Lower leg skin (tissue), 4 donors: ENCODE measurements at regions of chr16 and their contacts with region 1.

Region 1: DNA sequence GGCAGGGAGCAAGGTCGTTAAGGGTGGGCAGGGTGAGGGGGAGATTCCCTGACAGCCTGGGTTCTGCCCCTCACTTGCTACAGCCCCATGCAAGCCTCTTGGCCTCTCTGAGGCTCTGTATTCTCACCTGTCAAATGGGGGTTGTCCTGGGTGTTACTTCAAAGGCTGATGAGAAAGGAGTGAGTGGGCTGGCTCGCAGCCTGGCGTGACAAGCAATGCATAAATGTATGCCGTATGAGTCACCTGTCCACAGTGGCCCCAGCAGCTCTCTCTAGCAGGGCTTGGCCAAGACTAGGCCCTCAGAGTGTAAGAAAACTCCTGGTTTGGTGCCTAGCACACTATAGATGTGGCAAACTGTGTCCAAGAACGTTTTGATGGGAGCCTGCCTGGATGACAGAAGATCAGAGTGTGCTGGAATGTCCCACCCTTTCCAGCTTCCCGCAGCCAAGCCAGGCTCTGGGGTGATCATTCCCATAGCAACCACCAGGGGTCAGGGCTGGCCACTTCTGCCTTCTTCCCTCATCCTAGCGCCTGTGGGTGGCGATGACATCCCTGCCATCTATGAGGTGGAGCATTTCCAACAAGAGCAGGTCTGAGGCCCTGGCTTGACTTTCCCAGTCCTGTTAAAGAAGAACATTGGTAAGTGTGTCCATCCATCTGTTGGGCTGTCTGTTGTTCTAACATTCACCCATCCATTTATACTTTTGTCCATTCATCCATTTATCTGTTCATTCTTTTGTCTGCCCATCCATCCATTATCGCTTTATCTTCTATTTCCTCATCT is 37.2 kb upstream of the ADGRG1 start:
- DNase-seq: peak; percentile 66 to 93
- H3K4me3 ChIP-seq: no peak overlapping the region
- CTCF ChIP-seq: peak in 1 of 3 donors; percentile 81
- POLR2A ChIP-seq: no peak

Region 2: GRCh38 chr16:57609541-57610401 is 18.5 kb after region 1 on chr16:
- intact Hi-C with region 1: no loop called
- DNase-seq: peak; percentile 15 to 79
- H3K4me3 ChIP-seq: no peak overlapping the region
- CTCF ChIP-seq: no peak
- POLR2A ChIP-seq: no peak

Region 3: DNA sequence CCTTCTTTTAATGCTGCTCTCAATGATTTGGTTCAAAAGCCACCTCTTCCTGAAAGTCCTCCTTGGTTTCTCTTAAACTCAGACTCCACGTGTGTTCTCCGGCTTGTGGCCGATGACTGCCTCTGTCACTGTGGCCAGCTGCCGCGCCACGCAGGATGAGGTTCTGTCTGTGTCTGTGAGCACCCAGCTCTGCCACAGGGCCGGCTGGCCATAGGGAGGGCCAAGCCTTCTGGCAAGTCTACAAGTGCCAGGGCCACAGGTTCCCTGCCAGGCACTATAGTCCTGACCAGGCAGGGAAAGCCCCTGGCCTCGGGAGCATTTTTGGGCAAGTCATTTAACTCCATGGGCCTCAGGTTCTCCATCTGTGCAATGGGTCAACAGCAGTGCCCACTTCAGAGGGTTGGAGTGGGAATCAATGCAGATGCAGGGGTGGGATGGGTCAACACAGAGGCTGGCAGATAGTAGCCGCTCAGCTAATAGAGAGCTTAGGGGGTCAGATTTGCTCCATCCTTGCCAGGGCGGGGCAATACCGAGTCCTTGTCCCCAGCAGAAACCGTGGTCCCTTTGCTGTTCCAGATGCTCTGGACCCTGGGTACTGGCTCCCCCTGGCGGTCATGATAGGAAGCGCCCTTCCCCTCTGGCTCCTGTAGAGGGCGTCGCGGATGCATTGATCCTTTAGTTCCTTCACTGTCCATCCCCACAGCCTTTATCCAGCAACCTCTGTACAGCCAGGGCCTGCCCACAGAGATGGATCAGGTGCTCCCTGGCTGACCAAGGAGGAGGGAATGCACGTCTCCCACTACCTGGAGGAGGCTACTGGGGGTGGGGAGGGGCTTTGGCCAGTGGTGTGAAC is 57.5 kb after region 1 on chr16:
- intact Hi-C with region 1: loop called (anchors 5 kb)
- DNase-seq: peak; percentile 73 to 96
- H3K4me3 ChIP-seq: no peak overlapping the region
- CTCF ChIP-seq: peak in 2 of 3 donors; percentile 78 to 99
- POLR2A ChIP-seq: no peak

Region 4: GRCh38 chr16:57834936-57835335 is 243.7 kb after region 1 on chr16:
- intact Hi-C with region 1: no loop called
- DNase-seq: no peak
- H3K4me3 ChIP-seq: no peak overlapping the region
- CTCF ChIP-seq: no peak
- POLR2A ChIP-seq: no peak